Activated naive CD4-positive, alpha-beta T cell treated with anti-CD3 and anti-CD28 coated beads for 36 hours (primary cell): ENCODE measurements at regions of chr6 and their contacts with region 1.

Region 1: GRCh38 chr6:127464881-127465459 is 5.8 kb upstream of the KIAA0408 start:
- DNase-seq: peak; percentile 83
- H3K4me3 Mint-ChIP-seq: no peak overlapping the region
- H3K27ac Mint-ChIP-seq: no peak overlapping the region
- H3K4me1 Mint-ChIP-seq: no peaks in the 10 kb centered on the region
- H3K27me3 Mint-ChIP-seq: no peaks in the 10 kb centered on the region

Region 2: GRCh38 chr6:127302728-127303660 is 162.0 kb before region 1 on chr6:
- CTCF ChIA-PET with region 1: interaction called, 11 read pairs
- intact Hi-C with region 1: loop called (anchors 1 kb)
- DNase-seq: peak; percentile 72
- H3K4me3 Mint-ChIP-seq: no peak overlapping the region
- H3K27ac Mint-ChIP-seq: no peak overlapping the region
- H3K4me1 Mint-ChIP-seq: peaks cover 42% of the 10 kb centered on the region
- H3K27me3 Mint-ChIP-seq: no peaks in the 10 kb centered on the region

Region 3: DNA sequence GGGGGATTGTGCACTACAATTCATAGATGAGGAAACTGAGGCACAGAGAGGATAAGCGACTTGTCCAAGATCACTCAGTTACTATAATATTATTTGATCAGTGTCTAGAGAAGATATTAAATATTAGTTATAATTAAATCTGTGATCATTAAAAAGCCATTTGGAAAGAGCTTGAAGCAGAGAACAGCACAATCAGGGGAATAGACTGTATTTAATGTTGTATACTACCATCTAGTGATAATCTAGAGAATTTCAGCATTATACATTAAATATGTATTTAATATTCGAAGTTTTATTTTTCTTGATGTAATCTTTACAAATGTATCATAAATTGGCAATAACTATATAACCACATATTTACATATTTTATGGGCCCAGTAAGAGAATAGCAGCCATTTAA is 74.3 kb after region 1 on chr6:
- CTCF ChIA-PET with region 1: interaction called, 83 read pairs
- intact Hi-C with region 1: loop called (anchors 1 kb)
- DNase-seq: no peak
- H3K4me3 Mint-ChIP-seq: no peak overlapping the region
- H3K27ac Mint-ChIP-seq: no peak overlapping the region
- H3K4me1 Mint-ChIP-seq: no peaks in the 10 kb centered on the region
- H3K27me3 Mint-ChIP-seq: peaks cover 13% of the 10 kb centered on the region

Region 4: GRCh38 chr6:127641905-127642304 is 176.9 kb after region 1 on chr6:
- CTCF ChIA-PET with region 1: interaction called, 3 read pairs
- intact Hi-C with region 1: loop called (anchors 1 kb)
- DNase-seq: peak; percentile 8
- H3K4me3 Mint-ChIP-seq: no peak overlapping the region
- H3K27ac Mint-ChIP-seq: no peak overlapping the region
- H3K4me1 Mint-ChIP-seq: no peaks in the 10 kb centered on the region
- H3K27me3 Mint-ChIP-seq: peaks cover 2% of the 10 kb centered on the region

Region 5: GRCh38 chr6:127690092-127690491 is 225.1 kb after region 1 on chr6:
- CTCF ChIA-PET with region 1: no interaction called
- intact Hi-C with region 1: loop called (anchors 5 kb)
- DNase-seq: no peak
- H3K4me3 Mint-ChIP-seq: no peak overlapping the region
- H3K27ac Mint-ChIP-seq: no peak overlapping the region
- H3K4me1 Mint-ChIP-seq: no peaks in the 10 kb centered on the region
- H3K27me3 Mint-ChIP-seq: no peaks in the 10 kb centered on the region